CD8-positive, alpha-beta T cell (primary cell): ENCODE measurements at regions of chr5 and their contacts with region 1.

Region 1: GRCh38 chr5:64229163-64229774 is 63.6 kb downstream of the RNF180 start:
- DNase-seq: peak in 1 of 9 experiments; percentile 9
- ATAC-seq: no peak
- H3K4me3 ChIP-seq: no peak overlapping the region
- H3K4me3 Mint-ChIP-seq: no peak overlapping the region
- H3K27ac ChIP-seq: no peak overlapping the region
- H3K27ac Mint-ChIP-seq: no peak overlapping the region
- H3K4me1 ChIP-seq: no peaks in the 10 kb centered on the region
- H3K4me1 Mint-ChIP-seq: no peaks in the 10 kb centered on the region
- H3K27me3 ChIP-seq: no peaks in the 10 kb centered on the region
- H3K27me3 Mint-ChIP-seq: no peaks in the 10 kb centered on the region
- CTCF ChIP-seq: peak; percentile 38

Region 2: GRCh38 chr5:64331597-64332277 is 102.5 kb after region 1 on chr5:
- CTCF ChIA-PET with region 1: no interaction called
- POLR2A ChIA-PET with region 1: no interaction called
- intact Hi-C with region 1: no loop called
- DNase-seq: no peak
- ATAC-seq: no peak
- H3K4me3 ChIP-seq: no peak overlapping the region
- H3K4me3 Mint-ChIP-seq: no peak overlapping the region
- H3K27ac ChIP-seq: no peak overlapping the region
- H3K27ac Mint-ChIP-seq: no peak overlapping the region
- H3K4me1 ChIP-seq: no peaks in the 10 kb centered on the region
- H3K4me1 Mint-ChIP-seq: no peaks in the 10 kb centered on the region
- H3K27me3 ChIP-seq: no peaks in the 10 kb centered on the region
- H3K27me3 Mint-ChIP-seq: no peaks in the 10 kb centered on the region
- CTCF ChIP-seq: no peak

Region 3: GRCh38 chr5:64612344-64612961 is 383.2 kb after region 1 on chr5:
- CTCF ChIA-PET with region 1: interaction called, 4 read pairs
- POLR2A ChIA-PET with region 1: no interaction called
- intact Hi-C with region 1: loop called (anchors 5 kb)
- DNase-seq: peak in 2 of 9 experiments; percentile 10 to 19
- ATAC-seq: no peak
- H3K4me3 ChIP-seq: no peak overlapping the region
- H3K4me3 Mint-ChIP-seq: no peak overlapping the region
- H3K27ac ChIP-seq: no peak overlapping the region
- H3K27ac Mint-ChIP-seq: no peak overlapping the region
- H3K4me1 ChIP-seq: no peaks in the 10 kb centered on the region
- H3K4me1 Mint-ChIP-seq: peaks cover 2% of the 10 kb centered on the region
- H3K27me3 ChIP-seq: no peaks in the 10 kb centered on the region
- H3K27me3 Mint-ChIP-seq: peaks cover 15% of the 10 kb centered on the region
- CTCF ChIP-seq: no peak

Region 4: GRCh38 chr5:65525726-65526125 is 1296.5 kb after region 1 on chr5:
- CTCF ChIA-PET with region 1: no interaction called
- POLR2A ChIA-PET with region 1: no interaction called
- intact Hi-C with region 1: loop called in 1 of 2 experiments (anchors 10 kb)
- DNase-seq: no peak
- ATAC-seq: no peak
- H3K4me3 ChIP-seq: no peak overlapping the region
- H3K4me3 Mint-ChIP-seq: no peak overlapping the region
- H3K27ac ChIP-seq: no peak overlapping the region
- H3K27ac Mint-ChIP-seq: no peak overlapping the region
- H3K4me1 ChIP-seq: no peaks in the 10 kb centered on the region
- H3K4me1 Mint-ChIP-seq: no peaks in the 10 kb centered on the region
- H3K27me3 ChIP-seq: no peaks in the 10 kb centered on the region
- H3K27me3 Mint-ChIP-seq: no peaks in the 10 kb centered on the region
- CTCF ChIP-seq: no peak